ENCODE measurements at regions of chr18 and their contacts with region 1.

Region 1: DNA sequence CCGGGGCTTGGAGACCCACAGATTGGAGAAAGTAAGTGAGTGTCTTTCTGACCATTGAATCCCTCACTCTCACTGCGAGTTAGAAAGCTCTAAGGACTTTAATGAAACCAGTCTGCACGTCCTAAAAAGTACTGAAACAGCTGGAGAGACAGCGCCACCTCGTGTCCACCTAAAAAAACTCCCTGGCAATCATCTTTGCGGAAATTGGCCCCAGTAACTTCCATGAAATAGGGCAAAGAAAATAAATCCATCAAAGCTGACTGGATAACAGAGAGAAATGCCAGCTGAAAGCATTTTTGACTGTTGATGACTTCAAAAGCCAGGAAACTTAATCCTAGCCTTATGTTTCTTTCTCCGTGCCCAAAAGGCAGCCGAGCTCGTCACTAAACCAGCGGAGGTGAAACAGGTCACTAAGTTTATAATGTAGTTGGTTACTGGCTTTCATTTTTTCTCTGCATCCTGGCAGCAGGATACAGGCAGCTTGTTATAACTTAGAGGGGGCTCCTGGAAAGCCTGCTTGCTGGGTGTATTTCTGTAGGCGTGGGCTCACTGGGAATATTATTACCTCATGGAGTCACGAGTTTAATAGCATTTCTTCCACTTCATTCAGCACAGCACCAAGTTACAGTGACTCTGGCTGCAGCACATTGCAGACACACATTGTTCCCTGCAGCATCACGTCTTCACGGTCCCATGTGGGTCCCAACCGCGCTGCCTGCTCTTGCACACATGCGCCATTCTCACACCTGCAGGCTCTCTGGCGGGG is 266.5 kb downstream of the HRH4 start:
- DNase-seq: peak; percentile 86
- ATAC-seq: peak; percentile 86
- H3K4me3 ChIP-seq: no peak overlapping the region
- H3K27ac ChIP-seq: peak overlapping the region; percentile 51; the same call in 1 of the 2 replicates
- H3K4me1 ChIP-seq: peaks cover 10% of the 10 kb centered on the region
- H3K27me3 ChIP-seq: no peaks in the 10 kb centered on the region; the same call in 1 of the 2 replicates
- CTCF ChIP-seq: peak; percentile 92
- POLR2A ChIP-seq: 0 out of 2 replicates have a peak, but pooled peaks have one; percentile 24
- RAD21 ChIP-seq: peak; percentile 95

Region 2: GRCh38 chr18:24362758-24363157 is 364.2 kb before region 1 on chr18:
- CTCF ChIA-PET with region 1: no interaction called
- POLR2A ChIA-PET with region 1: interaction called, 4 read pairs
- dilution Hi-C with region 1: no loop called
- in situ Hi-C with region 1: loop called (anchors 10 kb)
- intact Hi-C with region 1: loop called (anchors 5 kb)
- DNase-seq: peak; percentile 6
- ATAC-seq: peak; percentile 66
- H3K4me3 ChIP-seq: no peak overlapping the region
- H3K27ac ChIP-seq: no peak overlapping the region
- H3K4me1 ChIP-seq: 0 out of 2 replicates have a peak, but pooled peaks cover 1% of the 10 kb centered on the region
- H3K27me3 ChIP-seq: no peaks in the 10 kb centered on the region
- CTCF ChIP-seq: no peak
- POLR2A ChIP-seq: no peak
- RAD21 ChIP-seq: no peak

Region 3: DNA sequence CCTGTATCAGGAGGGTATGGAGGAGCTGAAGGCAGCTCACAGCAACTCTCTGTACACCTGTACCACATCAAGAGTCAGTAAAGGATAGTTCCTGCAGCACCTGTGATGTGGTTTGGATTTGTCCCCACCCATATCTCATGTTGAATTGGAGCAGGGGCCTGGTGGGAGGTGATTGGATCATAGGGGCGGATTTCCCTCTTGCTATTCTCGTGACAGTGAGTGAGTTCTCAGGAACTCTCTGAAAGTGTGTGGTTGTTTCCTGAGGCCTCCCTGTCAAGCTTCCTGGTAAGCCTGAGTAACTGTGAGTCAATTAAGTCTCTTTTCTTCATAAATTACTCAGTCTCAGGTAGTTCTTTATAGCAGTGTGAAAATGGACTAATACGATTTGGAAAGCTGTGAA is 358.2 kb before region 1 on chr18:
- CTCF ChIA-PET with region 1: no interaction called
- POLR2A ChIA-PET with region 1: no interaction called
- dilution Hi-C with region 1: no loop called
- in situ Hi-C with region 1: loop called (anchors 10 kb)
- intact Hi-C with region 1: no loop called
- DNase-seq: peak; percentile 20
- ATAC-seq: no peak
- H3K4me3 ChIP-seq: no peak overlapping the region
- H3K27ac ChIP-seq: no peak overlapping the region
- H3K4me1 ChIP-seq: peaks cover 3% of the 10 kb centered on the region
- H3K27me3 ChIP-seq: no peaks in the 10 kb centered on the region
- CTCF ChIP-seq: no peak
- POLR2A ChIP-seq: no peak
- RAD21 ChIP-seq: no peak

Region 4: DNA sequence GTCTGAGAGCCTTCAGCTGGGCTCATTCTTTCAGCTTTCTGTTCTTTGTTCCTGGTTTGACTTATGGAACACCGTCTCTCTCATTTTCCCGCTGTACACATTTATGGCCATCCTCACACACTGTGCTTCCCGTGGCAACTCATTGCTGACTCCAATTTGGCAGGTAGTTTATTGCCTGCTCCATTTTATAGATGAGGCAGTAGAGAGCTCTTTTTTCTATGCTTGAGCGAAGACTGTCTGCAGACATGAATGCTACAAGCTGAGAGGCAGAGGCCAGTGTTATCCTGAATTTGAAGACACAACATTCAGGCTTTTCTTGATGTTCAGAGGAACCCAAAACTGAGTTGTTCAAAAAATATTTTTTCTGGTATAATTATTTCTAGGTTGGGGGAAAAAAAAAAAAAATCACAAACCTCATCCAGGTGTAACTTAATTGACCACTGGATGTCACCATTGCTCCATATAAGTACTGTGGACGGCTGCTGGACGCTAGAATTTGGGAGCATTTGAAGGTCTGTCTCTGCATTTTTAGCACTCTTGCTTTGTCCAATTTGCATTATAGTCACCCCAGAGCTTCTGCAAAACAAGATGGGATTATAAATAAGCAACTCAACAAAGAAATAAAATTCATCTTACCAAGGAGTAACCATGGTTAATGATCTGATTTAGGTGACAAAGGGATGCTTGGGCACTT is 183.0 kb before region 1 on chr18:
- CTCF ChIA-PET with region 1: interaction called, 5 read pairs
- POLR2A ChIA-PET with region 1: no interaction called
- dilution Hi-C with region 1: no loop called
- in situ Hi-C with region 1: no loop called
- intact Hi-C with region 1: loop called (anchors 1 kb)
- DNase-seq: peak; percentile 40
- ATAC-seq: peak; percentile 64
- H3K4me3 ChIP-seq: no peak overlapping the region
- H3K27ac ChIP-seq: no peak overlapping the region
- H3K4me1 ChIP-seq: no peaks in the 10 kb centered on the region
- H3K27me3 ChIP-seq: peaks cover 19% of the 10 kb centered on the region
- CTCF ChIP-seq: peak; percentile 62
- POLR2A ChIP-seq: no peak
- RAD21 ChIP-seq: peak; percentile 67

Region 5: DNA sequence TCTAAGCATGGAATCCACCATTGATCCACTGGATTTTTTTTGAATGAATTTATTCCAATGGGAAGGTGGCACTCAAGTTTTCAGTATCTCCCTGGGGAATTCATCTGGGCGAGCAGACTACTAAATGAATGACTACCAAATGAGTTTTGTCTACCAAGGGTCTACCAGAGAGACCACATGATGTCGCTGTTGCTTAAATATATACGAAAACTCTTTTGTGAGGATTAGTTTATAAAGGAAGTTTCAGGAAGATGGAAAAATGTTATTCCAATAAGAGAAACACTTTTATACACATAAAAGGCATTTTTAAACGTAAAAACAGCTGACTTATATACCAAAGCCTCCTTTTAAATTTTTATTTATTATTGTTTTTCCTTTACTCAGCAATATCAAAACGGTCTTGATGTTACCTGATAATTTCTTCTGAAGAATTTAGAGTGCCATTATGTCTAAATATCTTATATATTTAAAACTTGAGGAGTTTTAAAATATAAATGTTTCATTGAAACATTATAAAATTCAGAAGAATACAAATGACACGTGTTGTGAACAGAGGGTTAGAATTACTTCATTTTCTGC is 126.7 kb before region 1 on chr18:
- CTCF ChIA-PET with region 1: interaction called, 16 read pairs
- POLR2A ChIA-PET with region 1: interaction called, 3 read pairs
- dilution Hi-C with region 1: no loop called
- in situ Hi-C with region 1: loop called (anchors 5 kb)
- intact Hi-C with region 1: loop called (anchors 1 kb)
- DNase-seq: peak; percentile 75
- ATAC-seq: peak; percentile 79
- H3K4me3 ChIP-seq: no peak overlapping the region
- H3K27ac ChIP-seq: no peak overlapping the region
- H3K4me1 ChIP-seq: peaks cover 2% of the 10 kb centered on the region; the same call in 1 of the 2 replicates
- H3K27me3 ChIP-seq: peaks cover 24% of the 10 kb centered on the region
- CTCF ChIP-seq: peak; percentile 83
- POLR2A ChIP-seq: no peak
- RAD21 ChIP-seq: peak; percentile 83

Region 6: DNA sequence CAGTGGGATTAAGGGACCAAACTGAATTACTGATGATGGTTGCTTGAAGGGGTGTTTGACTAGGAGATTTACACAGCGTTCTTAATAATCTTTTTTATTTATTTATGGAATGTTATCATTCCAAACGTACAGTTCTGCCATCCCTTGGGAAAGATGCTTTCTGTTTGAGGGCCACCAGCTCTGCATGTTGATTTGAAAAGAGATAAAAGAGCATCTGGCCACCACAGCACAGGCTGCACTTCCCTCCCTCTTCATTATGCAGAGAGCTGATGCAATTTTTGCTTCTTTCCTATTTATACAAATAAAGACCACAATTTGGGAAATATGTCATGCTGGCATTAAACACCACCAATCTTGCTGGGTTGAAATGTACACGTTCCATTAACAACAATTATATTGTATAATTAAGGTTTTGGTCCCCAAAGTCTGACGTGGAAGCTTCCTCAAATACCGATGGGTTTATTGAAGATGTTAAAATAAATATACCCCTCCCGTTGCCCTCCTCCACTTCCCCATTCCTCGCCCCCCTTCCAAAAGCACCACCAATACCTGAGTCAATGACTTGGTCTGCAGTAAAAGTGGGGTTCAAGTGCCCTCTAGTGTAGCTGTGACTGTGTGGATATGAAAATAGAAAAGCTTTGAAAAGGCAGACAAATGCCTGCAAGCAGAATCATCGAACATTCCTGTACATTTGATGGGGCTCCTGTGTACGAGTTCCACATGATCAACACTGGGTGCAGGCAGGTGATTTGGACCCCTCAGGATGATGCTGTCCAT is 54.6 kb before region 1 on chr18:
- CTCF ChIA-PET with region 1: interaction called, 13 read pairs
- POLR2A ChIA-PET with region 1: no interaction called
- dilution Hi-C with region 1: no loop called
- in situ Hi-C with region 1: no loop called
- intact Hi-C with region 1: loop called (anchors 1 kb)
- DNase-seq: peak; percentile 39
- ATAC-seq: peak; percentile 75
- H3K4me3 ChIP-seq: no peak overlapping the region
- H3K27ac ChIP-seq: peak overlapping the region; percentile 80; the same call in 1 of the 2 replicates
- H3K4me1 ChIP-seq: peaks cover 14% of the 10 kb centered on the region
- H3K27me3 ChIP-seq: no peaks in the 10 kb centered on the region
- CTCF ChIP-seq: peak; percentile 51
- POLR2A ChIP-seq: no peak
- RAD21 ChIP-seq: peak; percentile 57

Region 7: DNA sequence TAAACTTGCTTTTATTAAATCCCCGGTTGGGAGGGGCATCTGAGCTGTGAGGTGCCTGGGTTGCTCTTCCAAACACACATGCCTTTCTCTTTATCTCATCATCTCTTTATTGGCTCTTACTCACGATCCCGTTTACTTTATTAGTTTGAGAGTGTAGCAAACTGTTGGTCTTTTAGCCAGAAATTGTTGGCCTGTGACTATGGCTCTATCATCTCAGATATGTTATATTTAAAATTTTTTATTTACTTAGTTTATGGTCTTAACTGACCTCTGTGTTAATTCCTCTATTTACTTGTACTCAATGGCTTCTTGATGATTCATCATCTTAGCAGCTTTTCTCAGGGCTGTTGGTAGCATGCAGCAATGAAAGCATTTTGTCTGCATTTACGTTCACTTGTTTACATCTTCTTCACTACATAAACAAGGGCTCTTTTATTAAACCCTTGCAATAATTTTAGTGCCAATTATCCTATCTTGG is 141.9 kb after region 1 on chr18:
- CTCF ChIA-PET with region 1: interaction called, 6 read pairs
- POLR2A ChIA-PET with region 1: no interaction called
- dilution Hi-C with region 1: no loop called
- in situ Hi-C with region 1: no loop called
- intact Hi-C with region 1: loop called (anchors 5 kb)
- DNase-seq: peak; percentile 85
- ATAC-seq: peak; percentile 93
- H3K4me3 ChIP-seq: no peak overlapping the region
- H3K27ac ChIP-seq: peak overlapping the region; percentile 44; the same call in 1 of the 2 replicates
- H3K4me1 ChIP-seq: peaks cover 5% of the 10 kb centered on the region
- H3K27me3 ChIP-seq: no peaks in the 10 kb centered on the region
- CTCF ChIP-seq: no peak
- POLR2A ChIP-seq: no peak
- RAD21 ChIP-seq: no peak